ENCODE measurements at regions of chr18 and their contacts with region 1.

Region 1: GRCh38 chr18:62404881-62405280 is 79.8 kb downstream of the TNFRSF11A start:
- DNase-seq: no peak
- ATAC-seq: no peak
- H3K4me3 ChIP-seq: no peak overlapping the region
- H3K27ac ChIP-seq: no peak overlapping the region
- H3K4me1 ChIP-seq: peaks cover 5% of the 10 kb centered on the region; the same call in 1 of the 2 replicates
- H3K27me3 ChIP-seq: no peaks in the 10 kb centered on the region
- CTCF ChIP-seq: no peak

Region 2: GRCh38 chr18:62372156-62372555 is 32.7 kb before region 1 on chr18:
- CTCF ChIA-PET with region 1: no interaction called
- POLR2A ChIA-PET with region 1: interaction called, 12 read pairs
- intact Hi-C with region 1: no loop called
- DNase-seq: no peak
- ATAC-seq: no peak
- H3K4me3 ChIP-seq: no peak overlapping the region
- H3K27ac ChIP-seq: no peak overlapping the region
- H3K4me1 ChIP-seq: 0 out of 2 replicates have a peak, but pooled peaks cover 4% of the 10 kb centered on the region
- H3K27me3 ChIP-seq: no peaks in the 10 kb centered on the region
- CTCF ChIP-seq: no peak

Region 3: DNA sequence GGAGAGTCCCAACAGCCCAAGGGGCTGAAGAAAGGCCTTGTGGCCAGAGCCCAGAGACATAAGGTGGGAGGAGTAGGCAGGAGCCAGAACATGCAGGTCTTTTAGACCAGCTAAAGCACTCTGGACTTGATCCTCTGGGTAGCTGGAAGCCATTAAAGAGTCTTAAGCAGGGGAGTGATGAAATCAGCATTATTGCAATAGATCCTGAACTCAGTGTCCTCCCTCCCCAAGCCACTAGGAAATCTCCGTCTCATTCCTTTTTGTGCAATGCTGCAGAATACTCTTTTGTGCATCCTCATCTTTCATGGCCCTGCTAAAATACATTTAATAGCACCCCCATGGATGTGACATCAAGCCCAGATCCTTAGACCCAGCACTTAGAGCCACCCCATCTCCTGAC is 59.4 kb after region 1 on chr18:
- CTCF ChIA-PET with region 1: no interaction called
- POLR2A ChIA-PET with region 1: no interaction called
- intact Hi-C with region 1: no loop called
- DNase-seq: no peak
- ATAC-seq: no peak
- H3K4me3 ChIP-seq: no peak overlapping the region
- H3K27ac ChIP-seq: no peak overlapping the region
- H3K4me1 ChIP-seq: no peaks in the 10 kb centered on the region
- H3K27me3 ChIP-seq: no peaks in the 10 kb centered on the region
- CTCF ChIP-seq: no peak

Region 4: GRCh38 chr18:62526098-62527025 is 121.5 kb after region 1 on chr18:
- CTCF ChIA-PET with region 1: no interaction called
- POLR2A ChIA-PET with region 1: no interaction called
- intact Hi-C with region 1: no loop called
- DNase-seq: peak; percentile 81
- ATAC-seq: peak; percentile 5
- H3K4me3 ChIP-seq: peak overlapping the region; percentile 93
- H3K27ac ChIP-seq: peak overlapping the region; percentile 86
- H3K4me1 ChIP-seq: peaks cover 12% of the 10 kb centered on the region
- H3K27me3 ChIP-seq: no peaks in the 10 kb centered on the region
- CTCF ChIP-seq: no peak

Measured in PC-3 (cell line).